ENCODE measurements at regions of chr19 and their contacts with region 1.

Region 1: DNA sequence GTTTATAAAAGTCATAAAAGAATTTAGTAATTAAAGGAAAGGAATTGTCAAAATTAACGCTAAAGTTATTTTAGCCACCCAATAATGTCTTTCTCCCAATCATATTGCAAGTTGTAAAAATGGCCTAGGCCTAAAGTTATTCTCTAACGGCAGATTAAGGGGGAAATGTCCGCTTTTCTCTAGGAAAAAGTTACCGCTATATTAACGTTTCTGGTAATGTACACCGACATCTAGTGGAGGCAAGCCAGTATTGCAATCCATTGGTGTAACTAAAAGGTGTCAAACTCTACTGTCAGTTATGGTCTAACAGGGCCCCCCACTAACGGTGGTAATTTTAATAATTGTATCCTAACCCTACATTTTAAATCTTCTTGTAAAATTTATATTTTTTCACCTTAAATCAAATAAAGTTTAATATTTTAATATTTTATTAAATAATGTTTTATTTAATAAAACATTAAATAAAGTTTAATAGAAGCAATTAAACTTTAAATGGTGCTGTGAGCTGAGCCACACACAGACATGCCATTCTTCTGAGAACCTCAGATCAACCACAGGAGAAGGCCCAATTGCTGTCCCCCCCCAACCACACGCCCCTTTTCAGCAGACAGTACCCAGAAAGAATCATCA is 35.9 kb upstream of the ZSCAN5A start:
- DNase-seq: peak; percentile 3
- H3K4me3 ChIP-seq: no peak overlapping the region
- H3K27ac ChIP-seq: no peak overlapping the region
- H3K27me3 ChIP-seq: no peaks in the 10 kb centered on the region
- CTCF ChIP-seq: peak; percentile 93

Region 2: DNA sequence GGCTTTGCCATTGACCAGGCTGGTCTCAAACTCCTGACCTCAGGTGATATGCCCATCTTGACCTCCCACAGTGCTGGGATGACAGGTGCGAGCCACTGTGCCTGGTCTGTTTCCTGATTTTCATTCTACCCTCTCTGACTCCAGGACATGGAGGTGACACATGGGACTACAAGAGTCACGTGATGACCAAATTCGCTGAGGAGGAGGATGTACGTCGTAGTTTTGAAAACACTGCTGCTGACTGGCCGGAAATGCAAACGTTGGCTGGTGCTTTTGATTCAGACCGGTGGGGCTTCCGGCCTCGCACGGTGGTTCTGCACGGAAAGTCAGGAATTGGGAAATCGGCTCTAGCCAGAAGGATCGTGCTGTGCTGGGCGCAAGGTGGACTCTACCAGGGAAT is 323.8 kb before region 1 on chr19:
- CTCF ChIA-PET with region 1: interaction called, 13 read pairs
- POLR2A ChIA-PET with region 1: no interaction called
- DNase-seq: no peak
- H3K4me3 ChIP-seq: no peak overlapping the region
- H3K27ac ChIP-seq: no peak overlapping the region
- H3K27me3 ChIP-seq: no peaks in the 10 kb centered on the region
- CTCF ChIP-seq: no peak

Region 3: DNA sequence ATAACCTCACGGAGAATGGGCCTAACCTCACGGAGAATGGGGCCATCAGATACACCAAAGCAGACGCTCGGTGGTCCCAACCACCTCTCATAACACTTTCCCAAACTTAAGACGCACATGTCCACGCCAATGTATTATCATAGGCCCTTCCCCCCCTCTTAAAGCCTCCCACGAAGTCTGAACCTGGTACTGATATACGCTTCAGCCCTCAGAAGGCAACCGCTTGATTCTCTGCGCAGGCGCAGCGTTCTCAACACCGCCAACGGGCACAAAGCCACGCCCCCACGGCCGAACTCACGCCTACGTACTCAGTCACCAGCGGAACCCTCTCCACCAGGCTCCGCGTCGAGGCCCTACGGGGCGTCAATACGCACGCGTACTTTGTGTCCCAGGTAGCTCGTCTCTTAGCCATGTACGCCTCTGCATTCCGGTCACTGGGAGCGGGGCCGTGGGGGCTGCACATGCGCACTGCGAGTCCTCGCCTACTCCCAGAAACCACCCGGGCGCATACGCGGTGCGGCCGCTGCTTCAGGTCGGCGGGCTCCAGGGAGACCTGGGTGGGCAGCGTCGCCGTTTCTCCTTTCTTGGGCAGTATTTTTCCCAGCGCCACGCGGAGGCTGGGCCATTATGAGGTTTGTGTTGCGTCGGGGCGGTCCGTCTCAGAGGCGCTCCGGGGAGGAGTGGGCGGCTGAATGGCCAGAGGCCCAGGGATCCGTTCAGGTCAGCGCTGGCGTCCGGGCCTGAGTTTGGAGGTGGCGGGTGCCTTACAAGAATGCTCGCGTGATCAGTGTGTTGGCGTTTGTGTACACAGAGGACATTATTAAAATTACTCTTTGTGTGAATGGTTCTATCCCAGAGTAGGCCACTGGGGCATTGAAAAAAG is 17.5 kb after region 1 on chr19:
- CTCF ChIA-PET with region 1: interaction called, 14 read pairs
- POLR2A ChIA-PET with region 1: no interaction called
- DNase-seq: peak; percentile 76
- H3K4me3 ChIP-seq: peak overlapping the region; percentile 73
- H3K27ac ChIP-seq: peak overlapping the region; percentile 82
- H3K27me3 ChIP-seq: no peaks in the 10 kb centered on the region
- CTCF ChIP-seq: no peak

Region 4: GRCh38 chr19:56393119-56394012 is 42.8 kb after region 1 on chr19 and contains the start of gene ZNF582:
- CTCF ChIA-PET with region 1: no interaction called
- POLR2A ChIA-PET with region 1: no interaction called
- DNase-seq: peak; percentile 91
- H3K4me3 ChIP-seq: peak within 1 kb of the TSS; percentile 86
- H3K27ac ChIP-seq: peak within 1 kb of the TSS; percentile 78
- H3K27me3 ChIP-seq: no peaks in the 10 kb centered on the region
- CTCF ChIP-seq: peak; percentile 84
- polyA plus RNA-seq, gene ZNF582: 3.1 and 3.9 TPM in 2 replicates

Region 5: DNA sequence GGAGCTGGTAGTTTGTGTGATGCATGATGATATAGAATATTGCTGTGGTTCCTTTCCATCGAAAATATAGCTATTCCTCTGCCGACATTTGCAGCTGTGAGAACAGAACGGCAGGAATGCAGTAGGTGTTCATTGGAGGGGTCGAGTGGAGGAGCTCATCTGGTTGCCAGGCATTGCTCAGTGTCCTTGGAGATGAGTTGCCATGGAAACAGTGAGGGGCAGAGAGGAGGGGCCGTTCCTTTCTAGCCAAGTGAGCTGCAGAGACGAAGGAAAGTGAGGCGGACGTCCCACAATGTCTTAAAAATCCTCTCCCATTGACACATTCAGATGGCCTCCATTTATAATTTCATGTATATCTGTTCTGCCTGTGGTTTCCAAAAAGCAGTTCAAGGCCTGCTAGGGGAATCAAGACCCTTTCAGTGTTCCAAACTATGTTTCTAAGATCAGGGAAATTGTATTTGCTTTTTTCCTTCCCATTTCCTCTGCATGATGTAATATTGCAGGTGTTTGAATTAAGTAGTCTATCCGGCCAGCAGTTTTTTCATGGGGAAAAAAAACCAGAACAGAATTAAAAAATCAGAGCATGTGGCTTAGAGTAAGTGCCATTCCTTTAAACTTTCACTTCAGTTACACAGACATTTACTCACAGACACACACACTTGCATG is 362.2 kb after region 1 on chr19:
- CTCF ChIA-PET with region 1: no interaction called
- POLR2A ChIA-PET with region 1: no interaction called
- DNase-seq: no peak
- H3K4me3 ChIP-seq: no peak overlapping the region
- H3K27ac ChIP-seq: no peak overlapping the region
- H3K27me3 ChIP-seq: no peaks in the 10 kb centered on the region
- CTCF ChIP-seq: no peak

Measured in AG04450 (cell line).